CD8-positive, alpha-beta T cell (primary cell): ENCODE measurements at regions of chr12 and their contacts with region 1.

Region 1: DNA sequence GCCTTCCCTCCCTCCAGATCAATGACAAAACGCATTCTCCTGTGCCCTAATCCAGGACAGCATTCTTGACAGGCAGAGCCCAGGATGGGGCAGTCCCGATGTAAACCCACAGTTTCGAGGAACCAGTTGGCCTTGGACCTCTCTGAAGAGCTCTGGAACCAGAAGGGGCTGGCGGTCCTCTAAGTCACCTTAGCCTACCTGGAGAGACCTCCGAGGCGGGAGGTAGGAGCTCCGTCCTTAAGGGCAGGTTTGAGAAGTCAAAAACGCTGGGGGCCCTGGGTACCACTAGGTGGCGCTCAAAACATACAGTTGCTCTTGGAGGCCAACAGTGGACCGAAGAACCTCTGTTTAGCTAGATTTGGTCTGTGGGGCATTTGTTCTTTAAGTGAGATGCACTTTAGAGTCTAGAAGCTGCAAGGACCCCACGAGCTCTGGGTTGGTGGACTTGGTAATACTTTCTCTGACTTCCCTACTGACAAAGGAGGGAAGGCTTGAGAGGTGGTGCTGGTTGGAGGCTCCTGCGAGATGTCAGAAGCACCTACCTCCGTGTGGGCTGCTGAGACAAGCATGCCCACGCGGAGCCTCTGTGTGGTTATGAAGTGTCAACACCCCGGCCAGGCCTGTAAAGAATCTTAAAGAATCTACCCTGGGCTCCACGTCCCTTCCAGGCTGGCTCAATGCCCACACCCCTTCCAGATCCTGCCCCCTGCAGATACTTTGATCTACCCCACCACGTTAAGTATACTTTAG is 74.8 kb upstream of the CHST11 start:
- DNase-seq: peak; percentile 60 to 91 (median 83)
- ATAC-seq: peak; percentile 93
- H3K4me3 ChIP-seq: no peak overlapping the region
- H3K4me3 Mint-ChIP-seq: no peak overlapping the region
- H3K27ac ChIP-seq: no peak overlapping the region
- H3K27ac Mint-ChIP-seq: no peak overlapping the region
- H3K4me1 ChIP-seq: no peaks in the 10 kb centered on the region
- H3K4me1 Mint-ChIP-seq: peaks cover 8% of the 10 kb centered on the region
- H3K27me3 ChIP-seq: peaks cover 0 to 2% of the 10 kb centered on the region in 2 experiments
- H3K27me3 Mint-ChIP-seq: peaks cover 9% of the 10 kb centered on the region
- CTCF ChIP-seq: peak; percentile 89

Region 2: GRCh38 chr12:103012884-103013283 is 1369.0 kb before region 1 on chr12:
- CTCF ChIA-PET with region 1: no interaction called
- POLR2A ChIA-PET with region 1: no interaction called
- intact Hi-C with region 1: no loop called
- DNase-seq: no peak
- ATAC-seq: no peak
- H3K4me3 ChIP-seq: no peak overlapping the region
- H3K4me3 Mint-ChIP-seq: no peak overlapping the region
- H3K27ac ChIP-seq: no peak overlapping the region
- H3K27ac Mint-ChIP-seq: no peak overlapping the region
- H3K4me1 ChIP-seq: no peaks in the 10 kb centered on the region
- H3K4me1 Mint-ChIP-seq: no peaks in the 10 kb centered on the region
- H3K27me3 ChIP-seq: peaks cover 0 to 4% of the 10 kb centered on the region in 2 experiments
- H3K27me3 Mint-ChIP-seq: peaks cover 20% of the 10 kb centered on the region
- CTCF ChIP-seq: no peak

Region 3: DNA sequence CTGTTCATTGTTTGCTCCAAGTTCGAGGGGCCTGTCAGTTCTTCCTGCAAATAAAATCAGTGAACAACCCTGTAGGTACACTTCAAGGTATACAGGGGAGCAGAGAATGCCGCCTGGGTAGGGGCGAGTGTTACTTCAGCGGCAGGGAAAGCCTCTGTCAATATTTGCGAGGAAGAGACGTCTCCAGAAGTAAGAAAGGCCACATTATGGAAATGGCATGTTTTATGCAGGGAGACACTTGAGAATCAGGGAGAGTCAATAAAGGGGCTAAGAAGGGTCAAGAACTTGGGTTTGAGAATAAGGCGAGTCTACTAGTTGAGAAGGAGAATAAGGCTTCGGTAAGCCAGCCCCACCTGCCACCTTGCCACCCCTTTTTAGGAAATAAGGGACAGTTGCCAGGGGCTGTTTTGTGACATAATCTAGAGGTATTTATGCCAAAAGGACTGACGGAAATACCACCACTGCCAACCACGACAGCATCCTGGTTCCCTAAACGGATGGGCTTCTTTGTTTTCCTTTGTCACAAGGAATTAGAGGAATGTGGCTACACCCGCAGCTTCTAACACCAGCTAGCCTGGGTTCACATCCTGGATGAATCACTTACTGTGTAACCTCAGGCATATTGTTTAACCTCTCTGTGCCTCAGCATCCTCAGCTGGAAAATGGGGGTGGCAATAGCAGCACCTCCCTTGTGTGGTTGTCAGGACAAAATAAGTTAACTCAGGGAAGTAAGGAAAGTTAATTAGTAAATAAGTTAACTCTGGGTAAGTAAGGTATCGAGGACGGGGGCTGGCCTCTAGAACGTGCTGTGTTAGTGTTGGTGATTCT is 10.6 kb before region 1 on chr12:
- CTCF ChIA-PET with region 1: interaction called, 16 read pairs
- POLR2A ChIA-PET with region 1: no interaction called
- intact Hi-C with region 1: no loop called
- DNase-seq: no peak
- ATAC-seq: no peak
- H3K4me3 ChIP-seq: no peak overlapping the region
- H3K4me3 Mint-ChIP-seq: no peak overlapping the region
- H3K27ac ChIP-seq: no peak overlapping the region
- H3K27ac Mint-ChIP-seq: no peak overlapping the region
- H3K4me1 ChIP-seq: peaks cover 13% of the 10 kb centered on the region
- H3K4me1 Mint-ChIP-seq: peaks cover 11% of the 10 kb centered on the region
- H3K27me3 ChIP-seq: no peaks in the 10 kb centered on the region
- H3K27me3 Mint-ChIP-seq: no peaks in the 10 kb centered on the region
- CTCF ChIP-seq: no peak

Region 4: DNA sequence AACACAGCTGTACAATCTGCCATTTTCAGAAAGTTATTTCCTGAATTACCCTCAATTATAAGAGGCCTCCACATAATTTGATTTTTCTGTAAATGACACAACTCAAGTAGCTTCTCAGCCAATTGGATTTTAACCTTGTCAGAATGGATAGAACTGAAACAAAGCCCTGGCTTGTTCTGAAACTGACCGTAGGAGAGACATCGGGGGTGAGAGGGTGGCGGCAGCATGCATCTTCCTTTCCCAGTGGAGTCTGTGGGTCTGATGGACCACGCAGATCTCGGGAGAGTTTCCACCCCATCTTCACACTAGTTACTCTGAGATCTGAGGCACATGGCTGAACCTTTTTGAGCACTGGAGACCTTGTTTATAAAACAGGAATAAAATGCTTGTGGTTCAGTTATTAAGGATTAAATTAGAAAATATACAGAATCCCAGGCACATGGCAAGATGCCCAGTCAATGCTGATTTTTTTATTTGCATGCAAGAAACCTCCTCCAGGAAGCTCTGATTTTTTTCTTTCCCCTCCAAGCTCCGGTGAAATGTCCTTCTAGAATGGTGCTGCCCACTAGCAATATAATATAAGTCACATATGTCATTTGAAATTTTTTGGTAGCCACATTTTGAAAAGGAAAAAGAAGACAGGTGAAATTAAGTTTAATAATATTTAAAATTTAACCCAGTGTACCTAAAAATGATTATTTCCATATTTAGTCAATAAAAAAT is 228.8 kb after region 1 on chr12:
- CTCF ChIA-PET with region 1: interaction called, 10 read pairs
- POLR2A ChIA-PET with region 1: no interaction called
- intact Hi-C with region 1: no loop called
- DNase-seq: no peak
- ATAC-seq: no peak
- H3K4me3 ChIP-seq: no peak overlapping the region
- H3K4me3 Mint-ChIP-seq: no peak overlapping the region
- H3K27ac ChIP-seq: no peak overlapping the region
- H3K27ac Mint-ChIP-seq: no peak overlapping the region
- H3K4me1 ChIP-seq: no peaks in the 10 kb centered on the region
- H3K4me1 Mint-ChIP-seq: peaks cover 41% of the 10 kb centered on the region
- H3K27me3 ChIP-seq: no peaks in the 10 kb centered on the region
- H3K27me3 Mint-ChIP-seq: no peaks in the 10 kb centered on the region
- CTCF ChIP-seq: no peak

Region 5: GRCh38 chr12:104834607-104835006 is 452.7 kb after region 1 on chr12:
- CTCF ChIA-PET with region 1: interaction called, 10 read pairs
- POLR2A ChIA-PET with region 1: no interaction called
- intact Hi-C with region 1: no loop called
- DNase-seq: no peak
- ATAC-seq: no peak
- H3K4me3 ChIP-seq: no peak overlapping the region
- H3K4me3 Mint-ChIP-seq: no peak overlapping the region
- H3K27ac ChIP-seq: no peak overlapping the region
- H3K27ac Mint-ChIP-seq: no peak overlapping the region
- H3K4me1 ChIP-seq: no peaks in the 10 kb centered on the region
- H3K4me1 Mint-ChIP-seq: no peaks in the 10 kb centered on the region
- H3K27me3 ChIP-seq: no peaks in the 10 kb centered on the region
- H3K27me3 Mint-ChIP-seq: no peaks in the 10 kb centered on the region
- CTCF ChIP-seq: no peak

Region 6: DNA sequence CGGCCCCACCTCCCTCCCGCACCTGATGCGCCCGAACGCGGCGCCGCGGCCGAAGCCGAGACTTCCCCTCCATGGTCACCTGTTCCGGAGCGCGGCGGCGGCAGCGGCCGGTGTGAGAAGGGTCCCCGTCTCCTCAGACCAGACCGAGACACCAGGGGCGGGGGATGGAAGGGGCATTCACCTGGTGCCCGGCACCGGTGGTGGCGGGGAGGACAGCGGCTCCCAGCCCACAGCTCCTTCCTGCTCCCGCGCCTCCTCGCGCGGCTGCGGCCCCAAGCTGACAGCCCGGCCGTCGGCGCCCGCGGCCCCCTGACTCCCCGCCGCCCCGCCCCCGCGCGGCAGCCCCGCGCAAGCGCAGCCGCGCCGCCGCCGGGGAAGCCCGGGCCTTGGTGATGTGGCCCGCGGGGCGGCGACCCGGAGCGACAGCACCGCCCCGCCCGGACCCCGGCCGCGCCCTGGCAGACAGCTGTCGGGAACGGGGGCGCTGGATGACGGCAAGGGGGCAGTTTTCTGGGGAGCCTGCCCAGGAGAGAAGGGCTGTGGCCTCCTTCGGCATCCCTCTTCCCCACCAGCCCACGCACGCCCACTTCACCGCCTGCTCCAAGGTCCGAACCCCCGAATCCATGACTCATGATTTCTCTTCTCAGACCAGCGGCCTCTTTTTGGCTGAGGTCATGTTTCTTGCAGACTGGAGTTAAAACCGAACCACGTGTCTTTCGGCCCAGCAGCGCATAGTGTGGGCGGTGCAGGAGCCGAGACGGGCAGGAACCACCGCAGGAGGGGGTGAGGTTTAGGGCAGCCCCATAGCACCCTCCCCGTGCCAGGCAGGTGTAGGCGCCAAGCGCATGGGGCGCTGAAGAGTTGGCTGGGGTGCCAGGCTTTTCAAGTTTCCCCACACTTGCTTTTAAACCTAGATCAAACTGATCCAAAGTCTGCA is 576.4 kb after region 1 on chr12 and contains the start of gene SLC41A2:
- CTCF ChIA-PET with region 1: interaction called, 6 read pairs
- POLR2A ChIA-PET with region 1: no interaction called
- intact Hi-C with region 1: loop called in 1 of 2 experiments (anchors 5 kb)
- DNase-seq: peak; percentile 52 to 90 (median 76)
- ATAC-seq: peak; percentile 90
- H3K4me3 ChIP-seq: peak within 1 kb of the TSS; percentile 61 to 97
- H3K4me3 Mint-ChIP-seq: peak within 1 kb of the TSS; percentile 94
- H3K27ac ChIP-seq: peak within 1 kb of the TSS; percentile 40 to 42
- H3K27ac Mint-ChIP-seq: peak within 1 kb of the TSS; percentile 85
- H3K4me1 ChIP-seq: peaks cover 13% of the 10 kb centered on the region
- H3K4me1 Mint-ChIP-seq: peaks cover 19% of the 10 kb centered on the region
- H3K27me3 ChIP-seq: no peaks in the 10 kb centered on the region
- H3K27me3 Mint-ChIP-seq: peaks cover 17% of the 10 kb centered on the region
- CTCF ChIP-seq: no peak
- total RNA-seq, gene SLC41A2: 3.4 to 4.2 TPM